GM12878 (cell line): ENCODE measurements at regions of chr10 and their contacts with region 1.

Region 1: DNA sequence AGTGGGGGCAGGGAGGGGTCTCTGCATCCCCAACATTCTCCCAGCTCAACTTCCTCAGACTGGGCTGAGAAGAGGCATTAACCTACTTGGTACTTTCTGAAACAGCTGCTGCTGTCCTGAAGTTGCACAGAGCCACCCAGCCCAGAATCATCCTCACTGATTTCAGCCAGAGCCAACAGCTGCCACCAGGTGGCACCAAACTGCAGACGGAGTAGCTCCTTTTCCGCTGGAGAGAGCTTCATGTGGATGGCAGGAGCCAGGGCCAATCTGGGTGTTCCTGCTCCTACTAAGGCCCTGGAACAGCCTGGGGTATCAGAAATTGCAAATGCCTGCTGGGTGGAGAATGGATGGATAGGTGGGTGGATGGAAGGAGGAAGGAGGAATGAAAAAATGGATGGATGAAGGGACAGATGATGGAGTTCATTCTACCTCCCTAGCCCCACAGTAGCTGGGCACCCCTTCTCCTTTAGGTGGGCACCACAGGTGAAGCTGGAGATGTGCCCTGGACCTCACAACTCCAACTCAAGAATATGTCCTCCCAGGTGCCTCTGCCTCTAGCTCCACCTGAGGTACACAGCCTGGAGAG is 11.8 kb upstream of the DRGX start:
- DNase-seq: no peak
- ATAC-seq: peak; percentile 96
- H3K4me3 ChIP-seq: no peak overlapping the region
- H3K27ac ChIP-seq: no peak overlapping the region
- H3K4me1 ChIP-seq: no peaks in the 10 kb centered on the region
- H3K27me3 ChIP-seq: peaks cover 0 to 1% of the 10 kb centered on the region in 2 experiments; a peak in 1 of 4 replicates
- CTCF ChIP-seq: peak; percentile 88 to 93 (median 92)
- EP300 ChIP-seq: no peak
- POLR2A ChIP-seq: no peak
- RAD21 ChIP-seq: peak; percentile 81

Region 2: GRCh38 chr10:48981310-48981907 is 426.2 kb before region 1 on chr10:
- CTCF ChIA-PET with region 1: no interaction called
- POLR2A ChIA-PET with region 1: no interaction called
- RAD21 ChIA-PET with region 1: interaction called, 3 read pairs
- SMC1A ChIA-PET with region 1: no interaction called
- in situ Hi-C with region 1: no loop called
- intact Hi-C with region 1: loop called (anchors 10 kb)
- DNase-seq: no peak
- ATAC-seq: peak; percentile 88
- H3K4me3 ChIP-seq: no peak overlapping the region
- H3K27ac ChIP-seq: no peak overlapping the region
- H3K4me1 ChIP-seq: no peaks in the 10 kb centered on the region
- H3K27me3 ChIP-seq: no peaks in the 10 kb centered on the region
- CTCF ChIP-seq: peak; percentile 70 to 81 (median 80)
- EP300 ChIP-seq: no peak
- POLR2A ChIP-seq: no peak
- RAD21 ChIP-seq: peak; percentile 67

Region 3: GRCh38 chr10:49397036-49397999 is 10.3 kb before region 1 on chr10:
- CTCF ChIA-PET with region 1: interaction called, 10 read pairs
- POLR2A ChIA-PET with region 1: no interaction called
- RAD21 ChIA-PET with region 1: interaction called, 3 read pairs
- SMC1A ChIA-PET with region 1: interaction called, 3 read pairs
- in situ Hi-C with region 1: no loop called
- intact Hi-C with region 1: no loop called
- DNase-seq: no peak
- ATAC-seq: no peak; the same call in 2 of the 3 replicates
- H3K4me3 ChIP-seq: no peak overlapping the region
- H3K27ac ChIP-seq: no peak overlapping the region
- H3K4me1 ChIP-seq: no peaks in the 10 kb centered on the region
- H3K27me3 ChIP-seq: peaks cover 13 to 17% of the 10 kb centered on the region in 2 experiments
- CTCF ChIP-seq: no peak
- EP300 ChIP-seq: no peak
- POLR2A ChIP-seq: no peak
- RAD21 ChIP-seq: no peak

Region 4: DNA sequence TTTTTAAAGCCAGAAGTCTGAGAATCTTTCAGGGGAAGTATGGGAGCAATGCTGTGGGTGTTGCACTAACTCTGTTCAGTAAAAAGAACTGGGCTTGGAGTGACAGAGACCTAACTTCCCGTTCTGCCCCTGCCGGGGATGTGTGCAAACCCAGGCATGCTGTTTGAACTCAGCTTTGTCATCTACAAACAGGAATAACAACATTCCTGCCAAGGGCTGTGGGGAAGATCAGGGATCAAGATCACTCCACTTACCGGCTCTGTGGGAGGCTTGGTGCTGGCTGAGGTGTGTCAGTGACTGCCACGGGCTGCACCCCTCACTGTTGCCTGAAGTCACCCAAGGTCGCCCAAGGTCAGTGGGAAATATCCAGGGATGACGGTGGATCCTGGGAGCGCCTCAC is 11.4 kb after region 1 on chr10:
- CTCF ChIA-PET with region 1: interaction called, 17 read pairs
- POLR2A ChIA-PET with region 1: no interaction called
- RAD21 ChIA-PET with region 1: no interaction called
- SMC1A ChIA-PET with region 1: no interaction called
- in situ Hi-C with region 1: no loop called
- intact Hi-C with region 1: no loop called
- DNase-seq: no peak
- ATAC-seq: no peak
- H3K4me3 ChIP-seq: no peak overlapping the region
- H3K27ac ChIP-seq: no peak overlapping the region
- H3K4me1 ChIP-seq: no peaks in the 10 kb centered on the region
- H3K27me3 ChIP-seq: no peaks in the 10 kb centered on the region; a peak in 1 of 4 replicates
- CTCF ChIP-seq: no peak
- EP300 ChIP-seq: no peak
- POLR2A ChIP-seq: no peak
- RAD21 ChIP-seq: no peak

Region 5: GRCh38 chr10:49500418-49500817 is 92.8 kb after region 1 on chr10:
- CTCF ChIA-PET with region 1: interaction called, 10 read pairs
- POLR2A ChIA-PET with region 1: no interaction called
- RAD21 ChIA-PET with region 1: interaction called, 6 read pairs
- SMC1A ChIA-PET with region 1: interaction called, 4 read pairs
- in situ Hi-C with region 1: no loop called
- intact Hi-C with region 1: no loop called
- DNase-seq: no peak
- ATAC-seq: no peak
- H3K4me3 ChIP-seq: no peak overlapping the region
- H3K27ac ChIP-seq: no peak overlapping the region
- H3K4me1 ChIP-seq: no peaks in the 10 kb centered on the region
- H3K27me3 ChIP-seq: no peaks in the 10 kb centered on the region
- CTCF ChIP-seq: no peak
- EP300 ChIP-seq: no peak
- POLR2A ChIP-seq: no peak
- RAD21 ChIP-seq: no peak

Region 6: DNA sequence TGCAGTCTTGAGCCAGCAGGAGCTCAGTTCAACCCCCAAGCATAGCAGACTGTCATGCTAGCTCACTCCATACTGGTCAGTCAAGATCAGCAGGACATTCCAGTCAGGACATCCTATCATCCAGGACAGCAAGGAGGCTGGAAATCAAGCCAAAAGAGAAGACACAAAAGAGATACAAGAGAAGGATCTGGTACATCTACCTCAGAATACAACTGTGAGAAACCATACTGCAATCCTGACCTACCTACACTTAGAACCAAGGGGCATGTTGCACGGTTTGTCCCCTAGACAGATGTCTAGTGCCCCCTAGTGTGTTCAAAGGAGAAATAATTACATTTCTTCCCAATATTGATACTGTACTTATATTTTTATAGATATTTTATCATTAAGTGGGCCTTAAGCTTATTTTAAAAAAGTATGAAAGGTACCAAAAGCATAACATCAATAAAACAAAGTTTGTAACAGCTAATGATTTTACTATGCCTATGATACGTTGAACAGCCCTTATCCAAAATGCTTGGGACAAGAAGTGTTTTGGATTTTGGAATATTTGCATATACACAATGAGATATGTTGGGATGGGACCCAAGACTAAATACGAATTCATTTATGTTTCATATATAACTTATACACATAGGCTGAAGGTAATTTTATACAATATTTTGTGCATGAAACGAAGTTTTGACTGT is 104.6 kb after region 1 on chr10:
- CTCF ChIA-PET with region 1: interaction called, 190 read pairs
- POLR2A ChIA-PET with region 1: interaction called, 4 read pairs
- RAD21 ChIA-PET with region 1: interaction called, 55 read pairs
- SMC1A ChIA-PET with region 1: interaction called, 61 read pairs
- in situ Hi-C with region 1: no loop called
- intact Hi-C with region 1: loop called (anchors 1 kb)
- DNase-seq: no peak
- ATAC-seq: peak; percentile 89
- H3K4me3 ChIP-seq: no peak overlapping the region
- H3K27ac ChIP-seq: no peak overlapping the region
- H3K4me1 ChIP-seq: no peaks in the 10 kb centered on the region; the same call in 1 of the 2 replicates
- H3K27me3 ChIP-seq: no peaks in the 10 kb centered on the region
- CTCF ChIP-seq: peak; percentile 60 to 77 (median 64)
- EP300 ChIP-seq: no peak
- POLR2A ChIP-seq: no peak
- RAD21 ChIP-seq: peak; percentile 76